Naive thymus-derived CD4-positive, alpha-beta T cell (primary cell): ENCODE measurements at regions of chr1 and their contacts with region 1.

Region 1: GRCh38 chr1:54996359-54996868 is 2.3 kb upstream of the BSND start:
- DNase-seq: peak; percentile 41 to 81 (median 66)
- ATAC-seq: peak; percentile 87
- H3K4me3 ChIP-seq: peak overlapping the region; percentile 35
- H3K4me3 Mint-ChIP-seq: peak overlapping the region; percentile 32 to 76 (median 62)
- H3K27ac ChIP-seq: no peak overlapping the region
- H3K27ac Mint-ChIP-seq: peak overlapping the region in 3 of 9 donors; percentile 21 to 70 (median 58)
- H3K4me1 ChIP-seq: peaks cover 13 to 14% of the 10 kb centered on the region in 2 donors
- H3K4me1 Mint-ChIP-seq: peaks cover 17 to 27% (median 22%) of the 10 kb centered on the region in 7 donors
- H3K27me3 ChIP-seq: no peaks in the 10 kb centered on the region
- H3K27me3 Mint-ChIP-seq: peaks cover 21 to 46% (median 41%) of the 10 kb centered on the region in 5 donors

Region 2: GRCh38 chr1:54571803-54572541 is 424.4 kb before region 1 on chr1:
- CTCF ChIA-PET with region 1: no interaction called
- POLR2A ChIA-PET with region 1: no interaction called
- intact Hi-C with region 1: no loop called
- DNase-seq: no peak
- ATAC-seq: no peak
- H3K4me3 ChIP-seq: no peak overlapping the region
- H3K4me3 Mint-ChIP-seq: no peak overlapping the region
- H3K27ac ChIP-seq: no peak overlapping the region
- H3K27ac Mint-ChIP-seq: peak overlapping the region in 1 of 9 donors; percentile 23
- H3K4me1 ChIP-seq: no peaks in the 10 kb centered on the region
- H3K4me1 Mint-ChIP-seq: peaks cover 0 to 12% (median 0%) of the 10 kb centered on the region in 7 donors
- H3K27me3 ChIP-seq: no peaks in the 10 kb centered on the region
- H3K27me3 Mint-ChIP-seq: peaks cover 0 to 1% (median 0%) of the 10 kb centered on the region in 5 donors

Region 3: GRCh38 chr1:54671985-54672608 is 324.3 kb before region 1 on chr1:
- CTCF ChIA-PET with region 1: interaction called, 3 read pairs
- POLR2A ChIA-PET with region 1: no interaction called
- intact Hi-C with region 1: loop called in 1 of 2 experiments (anchors 2 kb)
- DNase-seq: peak; percentile 18 to 69 (median 53)
- ATAC-seq: peak; percentile 86
- H3K4me3 ChIP-seq: no peak overlapping the region
- H3K4me3 Mint-ChIP-seq: no peak overlapping the region
- H3K27ac ChIP-seq: no peak overlapping the region
- H3K27ac Mint-ChIP-seq: no peak overlapping the region
- H3K4me1 ChIP-seq: no peaks in the 10 kb centered on the region
- H3K4me1 Mint-ChIP-seq: peaks cover 0 to 6% (median 0%) of the 10 kb centered on the region in 7 donors
- H3K27me3 ChIP-seq: no peaks in the 10 kb centered on the region
- H3K27me3 Mint-ChIP-seq: peaks cover 0 to 10% (median 0%) of the 10 kb centered on the region in 5 donors

Region 4: GRCh38 chr1:54810100-54810942 is 186.1 kb before region 1 on chr1:
- CTCF ChIA-PET with region 1: no interaction called
- POLR2A ChIA-PET with region 1: no interaction called
- intact Hi-C with region 1: no loop called
- DNase-seq: peak; percentile 11 to 69 (median 53)
- ATAC-seq: peak; percentile 69
- H3K4me3 ChIP-seq: no peak overlapping the region
- H3K4me3 Mint-ChIP-seq: no peak overlapping the region
- H3K27ac ChIP-seq: no peak overlapping the region
- H3K27ac Mint-ChIP-seq: peak overlapping the region in 1 of 9 donors; percentile 55
- H3K4me1 ChIP-seq: peaks cover 0 to 11% of the 10 kb centered on the region in 2 donors
- H3K4me1 Mint-ChIP-seq: peaks cover 0 to 29% (median 7%) of the 10 kb centered on the region in 7 donors
- H3K27me3 ChIP-seq: no peaks in the 10 kb centered on the region
- H3K27me3 Mint-ChIP-seq: no peaks in the 10 kb centered on the region

Region 5: GRCh38 chr1:54944610-54945544 is 51.5 kb before region 1 on chr1:
- CTCF ChIA-PET with region 1: interaction called, 9 read pairs
- POLR2A ChIA-PET with region 1: no interaction called
- intact Hi-C with region 1: loop called (anchors 1 kb)
- DNase-seq: peak; percentile 17 to 61 (median 45)
- ATAC-seq: peak; percentile 80
- H3K4me3 ChIP-seq: no peak overlapping the region
- H3K4me3 Mint-ChIP-seq: peak overlapping the region in 1 of 10 donors; percentile 28
- H3K27ac ChIP-seq: no peak overlapping the region
- H3K27ac Mint-ChIP-seq: no peak overlapping the region
- H3K4me1 ChIP-seq: peaks cover 3 to 7% of the 10 kb centered on the region in 2 donors
- H3K4me1 Mint-ChIP-seq: peaks cover 9 to 16% (median 11%) of the 10 kb centered on the region in 7 donors
- H3K27me3 ChIP-seq: no peaks in the 10 kb centered on the region
- H3K27me3 Mint-ChIP-seq: peaks cover 0 to 11% (median 0%) of the 10 kb centered on the region in 5 donors

Region 6: GRCh38 chr1:54950369-54951163 is 45.8 kb before region 1 on chr1:
- CTCF ChIA-PET with region 1: no interaction called
- POLR2A ChIA-PET with region 1: no interaction called
- intact Hi-C with region 1: loop called (anchors 1 kb)
- DNase-seq: peak in 5 of 9 donors; percentile 7 to 53 (median 22)
- ATAC-seq: peak; percentile 65
- H3K4me3 ChIP-seq: no peak overlapping the region
- H3K4me3 Mint-ChIP-seq: peak overlapping the region in 3 of 10 donors; percentile 25 to 48 (median 43)
- H3K27ac ChIP-seq: no peak overlapping the region
- H3K27ac Mint-ChIP-seq: no peak overlapping the region
- H3K4me1 ChIP-seq: peaks cover 0 to 4% of the 10 kb centered on the region in 2 donors
- H3K4me1 Mint-ChIP-seq: peaks cover 0 to 17% (median 4%) of the 10 kb centered on the region in 7 donors
- H3K27me3 ChIP-seq: no peaks in the 10 kb centered on the region
- H3K27me3 Mint-ChIP-seq: peaks cover 0 to 11% (median 4%) of the 10 kb centered on the region in 5 donors